Left lung (tissue), 14 donors: ENCODE measurements at regions of chr5 and their contacts with region 1.

Region 1: DNA sequence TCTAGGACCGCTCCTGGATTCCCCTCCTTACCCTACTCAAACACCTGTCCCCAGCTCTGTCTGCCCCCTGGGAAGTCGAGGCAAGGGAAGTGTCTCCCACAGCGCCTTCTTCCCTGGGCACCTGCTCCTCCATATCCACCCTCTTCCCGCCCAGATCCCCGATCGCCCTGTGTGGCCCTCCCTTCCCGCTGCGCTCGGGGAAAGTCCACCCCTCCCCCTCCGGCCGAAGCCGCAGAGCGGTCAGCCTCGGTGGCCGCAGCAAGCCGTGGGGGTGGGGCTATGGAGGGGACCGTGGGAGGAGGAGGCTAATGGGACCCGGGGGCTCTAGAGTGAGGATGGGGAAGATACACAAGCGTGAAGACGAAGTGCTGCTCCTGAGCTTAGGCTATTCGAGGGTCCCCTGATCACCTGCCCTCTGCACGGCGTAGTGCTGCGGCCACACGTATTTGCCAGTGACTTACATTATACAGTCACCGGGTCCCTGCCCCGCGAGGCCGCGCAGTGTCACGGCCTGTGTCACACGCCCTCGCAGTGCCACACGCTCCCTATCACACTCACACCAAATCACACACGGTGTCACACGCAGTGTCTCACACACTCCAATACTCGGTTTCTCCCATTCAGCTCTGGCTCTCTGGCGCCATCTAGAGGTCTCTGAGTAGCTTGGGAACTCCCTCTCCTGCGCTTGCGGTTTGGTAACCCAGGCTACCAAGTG is 658 bp upstream of the PCDH1 start:
- DNase-seq: peak; percentile 84 to 93 (median 90)
- ATAC-seq: peak; percentile 83
- H3K4me3 ChIP-seq: peak overlapping the region; percentile 26 to 65
- H3K27ac ChIP-seq: peak overlapping the region; percentile 79 to 84
- H3K4me1 ChIP-seq: peaks cover 0 to 53% of the 10 kb centered on the region in 2 donors
- H3K27me3 ChIP-seq: peaks cover 43 to 100% of the 10 kb centered on the region in 2 donors
- CTCF ChIP-seq: peak; percentile 97

Region 2: DNA sequence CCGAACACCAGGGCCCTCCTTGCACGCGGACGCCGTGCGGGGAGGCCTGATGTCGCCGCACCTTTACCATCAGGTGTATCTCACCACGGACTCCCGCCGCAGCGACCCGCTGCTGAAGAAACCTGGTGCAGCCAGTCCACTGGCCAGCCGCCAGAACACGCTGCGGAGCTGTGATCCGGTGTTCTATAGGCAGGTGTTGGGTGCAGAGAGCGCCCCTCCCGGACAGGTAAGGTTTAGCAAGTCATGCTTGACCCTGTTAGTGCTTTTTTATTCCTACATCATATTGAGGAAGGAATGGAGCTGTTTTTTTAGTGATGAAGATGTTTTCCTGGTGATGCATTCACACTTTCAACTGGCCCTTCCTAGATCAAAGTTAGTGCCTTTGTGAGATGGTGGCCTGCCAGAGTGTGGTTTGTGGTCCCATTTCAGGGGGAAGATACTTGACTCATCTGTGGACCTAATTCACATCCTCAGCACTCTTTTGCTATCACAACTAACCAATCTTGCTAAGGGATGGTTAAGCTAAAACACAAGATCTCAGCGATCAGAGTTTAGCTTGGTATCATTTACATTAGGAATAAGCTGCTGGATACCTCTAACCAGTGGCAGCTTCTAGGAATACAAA is 400.4 kb before region 1 on chr5:
- intact Hi-C with region 1: no loop called
- DNase-seq: peak in 2 of 4 donors; percentile 73 to 91
- ATAC-seq: peak; percentile 34
- H3K4me3 ChIP-seq: peak overlapping the region; percentile 51 to 52
- H3K27ac ChIP-seq: no peak overlapping the region
- H3K4me1 ChIP-seq: peaks cover 20 to 25% of the 10 kb centered on the region in 2 donors
- H3K27me3 ChIP-seq: peaks cover 11 to 58% of the 10 kb centered on the region in 2 donors
- CTCF ChIP-seq: peak in 1 of 2 donors; percentile 24

Region 3: GRCh38 chr5:141701360-141702119 is 177.3 kb before region 1 on chr5:
- intact Hi-C with region 1: loop called in 1 of 2 experiments (anchors 5 kb)
- DNase-seq: peak in 1 of 4 donors; percentile 59
- ATAC-seq: no peak
- H3K4me3 ChIP-seq: no peak overlapping the region
- H3K27ac ChIP-seq: no peak overlapping the region
- H3K4me1 ChIP-seq: peaks cover 7 to 18% of the 10 kb centered on the region in 2 donors
- H3K27me3 ChIP-seq: peaks cover 17 to 74% of the 10 kb centered on the region in 2 donors
- CTCF ChIP-seq: no peak

Region 4: DNA sequence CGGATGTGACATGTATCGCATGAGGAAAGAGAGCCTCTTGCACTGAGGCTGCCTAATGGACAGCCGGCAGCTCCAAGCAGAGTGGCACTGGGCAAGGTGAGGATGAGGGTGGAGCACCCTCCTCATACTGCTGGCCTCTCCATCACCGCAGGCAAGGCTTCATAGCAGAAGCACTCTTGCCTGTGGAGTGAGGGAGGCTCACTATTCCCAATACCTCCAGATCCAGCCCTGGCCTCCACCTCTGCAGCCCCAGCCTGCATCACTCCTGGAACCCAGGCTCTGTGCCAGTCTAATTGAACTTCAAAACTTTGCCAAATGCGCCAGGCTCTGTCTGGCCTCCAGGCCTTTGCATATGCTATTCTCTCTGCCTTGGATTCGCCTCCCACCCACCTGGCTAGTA is 167.2 kb before region 1 on chr5:
- intact Hi-C with region 1: no loop called
- DNase-seq: no peak
- ATAC-seq: no peak
- H3K4me3 ChIP-seq: no peak overlapping the region
- H3K27ac ChIP-seq: no peak overlapping the region
- H3K4me1 ChIP-seq: peaks cover 0 to 4% of the 10 kb centered on the region in 2 donors
- H3K27me3 ChIP-seq: no peaks in the 10 kb centered on the region
- CTCF ChIP-seq: no peak

Region 5: DNA sequence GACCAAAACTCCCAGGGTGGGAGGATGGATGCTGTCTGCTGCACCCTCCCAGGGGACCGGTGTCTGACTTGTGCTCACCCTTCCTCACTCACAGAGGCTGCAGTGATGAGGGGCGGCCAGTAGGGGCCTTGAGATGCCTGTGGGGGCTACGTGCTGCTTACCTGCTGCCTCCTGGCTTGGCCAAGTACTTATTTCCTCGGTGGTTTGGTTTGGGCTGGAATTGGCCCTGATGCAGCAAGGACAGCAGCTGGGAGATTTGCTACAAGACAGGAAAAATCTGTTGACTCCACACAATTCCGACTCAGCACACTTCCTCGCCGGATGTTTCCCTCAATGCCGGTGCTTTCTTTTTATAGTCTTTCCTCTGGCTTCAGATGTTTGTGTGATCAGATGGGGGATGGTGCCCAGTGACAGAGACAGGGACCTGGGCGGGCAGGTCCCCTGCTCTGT is 72.5 kb after region 1 on chr5:
- intact Hi-C with region 1: loop called in 1 of 2 experiments (anchors 10 kb)
- DNase-seq: peak in 1 of 4 donors; percentile 60
- ATAC-seq: no peak
- H3K4me3 ChIP-seq: no peak overlapping the region
- H3K27ac ChIP-seq: peak overlapping the region in 1 of 2 donors; percentile 38
- H3K4me1 ChIP-seq: peaks cover 11 to 43% of the 10 kb centered on the region in 2 donors
- H3K27me3 ChIP-seq: no peaks in the 10 kb centered on the region
- CTCF ChIP-seq: peak in 1 of 2 donors; percentile 21

Region 6: GRCh38 chr5:142644640-142645361 is 765.9 kb after region 1 on chr5:
- intact Hi-C with region 1: no loop called
- DNase-seq: no peak
- ATAC-seq: peak; percentile 89
- H3K4me3 ChIP-seq: no peak overlapping the region
- H3K27ac ChIP-seq: no peak overlapping the region
- H3K4me1 ChIP-seq: peaks cover 0 to 3% of the 10 kb centered on the region in 2 donors
- H3K27me3 ChIP-seq: no peaks in the 10 kb centered on the region
- CTCF ChIP-seq: no peak